ENCODE measurements at regions of chr19 and their contacts with region 1.

Region 1: GRCh38 chr19:46521241-46521868 is 25.7 kb upstream of the PNMA8B start:
- DNase-seq: no peak
- ATAC-seq: no peak
- H3K4me3 ChIP-seq: no peak overlapping the region
- H3K4me3 Mint-ChIP-seq: peak overlapping the region in 1 of 3 donors; percentile 1
- H3K27ac ChIP-seq: no peak overlapping the region
- H3K27ac Mint-ChIP-seq: peak overlapping the region; percentile 83 to 99
- H3K4me1 ChIP-seq: peaks cover 26 to 58% of the 10 kb centered on the region in 2 experiments
- H3K4me1 Mint-ChIP-seq: peaks cover 64 to 74% (median 73%) of the 10 kb centered on the region in 3 donors
- H3K27me3 ChIP-seq: no peaks in the 10 kb centered on the region
- H3K27me3 Mint-ChIP-seq: no peaks in the 10 kb centered on the region

Region 2: GRCh38 chr19:46600384-46601317 is 79.3 kb after region 1 on chr19:
- CTCF ChIA-PET with region 1: no interaction called
- POLR2A ChIA-PET with region 1: no interaction called
- DNase-seq: peak; percentile 88 to 99 (median 96)
- ATAC-seq: peak; percentile 85 to 89 (median 88)
- H3K4me3 ChIP-seq: peak overlapping the region; percentile 83 to 86
- H3K4me3 Mint-ChIP-seq: peak overlapping the region; percentile 90 to 99 (median 97)
- H3K27ac ChIP-seq: peak overlapping the region; percentile 100
- H3K27ac Mint-ChIP-seq: peak overlapping the region; percentile 100
- H3K4me1 ChIP-seq: peaks cover 7 to 47% of the 10 kb centered on the region in 2 experiments
- H3K4me1 Mint-ChIP-seq: peaks cover 32 to 47% (median 34%) of the 10 kb centered on the region in 3 donors
- H3K27me3 ChIP-seq: no peaks in the 10 kb centered on the region
- H3K27me3 Mint-ChIP-seq: peaks cover 0 to 2% of the 10 kb centered on the region in 2 donors

Region 3: GRCh38 chr19:46788262-46788967 is 267.1 kb after region 1 on chr19 and contains the start of gene SLC1A5:
- CTCF ChIA-PET with region 1: interaction called in 1 of 2 experiments, 13 read pairs
- POLR2A ChIA-PET with region 1: no interaction called
- DNase-seq: peak; percentile 84 to 96 (median 91)
- ATAC-seq: peak; percentile 80 to 83 (median 82)
- H3K4me3 ChIP-seq: peak within 1 kb of the TSS; percentile 81 to 94
- H3K4me3 Mint-ChIP-seq: peak within 1 kb of the TSS; percentile 86 to 92 (median 88)
- H3K27ac ChIP-seq: peak within 1 kb of the TSS; percentile 52
- H3K27ac Mint-ChIP-seq: peak within 1 kb of the TSS; percentile 71 to 90
- H3K4me1 ChIP-seq: peaks cover 31 to 66% of the 10 kb centered on the region in 2 experiments
- H3K4me1 Mint-ChIP-seq: peaks cover 57 to 69% (median 67%) of the 10 kb centered on the region in 3 donors
- H3K27me3 ChIP-seq: peaks cover 0 to 2% of the 10 kb centered on the region in 2 experiments
- H3K27me3 Mint-ChIP-seq: no peaks in the 10 kb centered on the region
- total RNA-seq, gene SLC1A5: 7.6 to 50.5 (median 47.7) TPM